Naive thymus-derived CD4-positive, alpha-beta T cell (primary cell): ENCODE measurements at regions of chr18 and their contacts with region 1.

Region 1: GRCh38 chr18:63216516-63217311 is 102.9 kb downstream of the BCL2 start:
- DNase-seq: peak in 7 of 9 donors; percentile 34 to 62 (median 49)
- ATAC-seq: peak; percentile 73
- H3K4me3 ChIP-seq: peak overlapping the region; percentile 25
- H3K4me3 Mint-ChIP-seq: peak overlapping the region; percentile 54 to 89 (median 78)
- H3K27ac ChIP-seq: peak overlapping the region; percentile 63
- H3K27ac Mint-ChIP-seq: peak overlapping the region; percentile 70 to 94 (median 90)
- H3K4me1 ChIP-seq: peaks cover 58 to 75% of the 10 kb centered on the region in 2 donors
- H3K4me1 Mint-ChIP-seq: peaks cover 71 to 99% (median 93%) of the 10 kb centered on the region in 7 donors
- H3K27me3 ChIP-seq: no peaks in the 10 kb centered on the region
- H3K27me3 Mint-ChIP-seq: no peaks in the 10 kb centered on the region

Region 2: GRCh38 chr18:63098018-63098981 is 118.4 kb before region 1 on chr18:
- CTCF ChIA-PET with region 1: no interaction called
- POLR2A ChIA-PET with region 1: no interaction called
- intact Hi-C with region 1: loop called in 1 of 2 experiments (anchors 2 kb)
- DNase-seq: peak in 8 of 9 donors; percentile 41 to 69 (median 58)
- ATAC-seq: peak; percentile 67
- H3K4me3 ChIP-seq: peak overlapping the region; percentile 11
- H3K4me3 Mint-ChIP-seq: peak overlapping the region; percentile 34 to 82 (median 76)
- H3K27ac ChIP-seq: no peak overlapping the region
- H3K27ac Mint-ChIP-seq: peak overlapping the region; percentile 43 to 93 (median 85)
- H3K4me1 ChIP-seq: peaks cover 23 to 30% of the 10 kb centered on the region in 2 donors
- H3K4me1 Mint-ChIP-seq: peaks cover 46 to 69% (median 60%) of the 10 kb centered on the region in 7 donors
- H3K27me3 ChIP-seq: no peaks in the 10 kb centered on the region
- H3K27me3 Mint-ChIP-seq: peaks cover 0 to 41% (median 0%) of the 10 kb centered on the region in 5 donors

Region 3: GRCh38 chr18:63229971-63230370 is 13.3 kb after region 1 on chr18:
- CTCF ChIA-PET with region 1: interaction called, 3 read pairs
- POLR2A ChIA-PET with region 1: interaction called, 7 read pairs
- intact Hi-C with region 1: loop called in 1 of 2 experiments (anchors 1 kb)
- DNase-seq: no peak
- ATAC-seq: no peak
- H3K4me3 ChIP-seq: peak overlapping the region; percentile 28
- H3K4me3 Mint-ChIP-seq: peak overlapping the region; percentile 10 to 87 (median 78)
- H3K27ac ChIP-seq: peak overlapping the region; percentile 61
- H3K27ac Mint-ChIP-seq: peak overlapping the region; percentile 36 to 93 (median 82)
- H3K4me1 ChIP-seq: peaks cover 19 to 61% of the 10 kb centered on the region in 2 donors
- H3K4me1 Mint-ChIP-seq: peaks cover 64 to 94% (median 87%) of the 10 kb centered on the region in 7 donors
- H3K27me3 ChIP-seq: no peaks in the 10 kb centered on the region
- H3K27me3 Mint-ChIP-seq: no peaks in the 10 kb centered on the region

Region 4: DNA sequence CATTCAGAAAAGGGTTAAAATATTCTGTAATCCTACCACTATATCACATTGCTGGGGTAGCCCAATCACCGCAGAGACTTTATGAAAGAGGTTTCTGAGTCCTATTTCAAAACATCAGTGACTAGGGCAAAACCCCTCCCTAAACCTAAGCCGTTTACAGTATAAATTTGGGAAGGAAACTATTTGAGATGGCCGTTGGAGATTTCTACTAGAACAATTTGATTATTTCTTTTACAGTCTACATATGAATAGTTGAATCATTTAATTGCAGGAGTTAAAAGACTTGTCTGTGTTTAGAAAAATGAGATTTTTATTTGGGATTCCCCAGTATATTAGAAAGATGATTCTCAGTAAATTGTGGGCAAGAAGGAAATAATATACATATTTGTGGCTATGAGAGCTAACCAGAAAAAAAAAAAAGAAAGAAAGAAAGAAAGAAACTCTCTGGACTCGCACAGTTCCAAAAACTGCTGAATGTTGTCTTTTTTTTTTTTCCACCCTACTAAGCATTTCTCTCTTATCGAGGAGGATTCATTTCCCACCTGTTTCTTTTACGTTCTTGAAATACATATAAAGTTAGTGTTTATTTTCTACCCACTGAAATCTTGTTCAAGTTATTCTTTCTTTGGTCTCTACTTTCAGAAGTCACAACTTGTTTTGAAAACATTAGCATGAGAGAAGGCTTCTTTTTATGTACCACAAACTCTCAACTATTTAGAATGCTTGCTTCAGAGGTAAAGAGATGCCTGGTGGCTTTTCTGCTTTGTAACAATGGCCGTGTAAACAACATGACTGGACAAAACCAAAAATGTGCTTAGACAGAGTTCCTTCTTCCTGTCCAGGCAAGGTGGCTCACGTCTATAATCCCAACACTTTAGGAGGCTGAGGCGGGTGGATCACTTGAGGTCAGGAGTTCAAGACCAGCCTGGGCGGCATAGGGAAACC is 37.0 kb after region 1 on chr18:
- CTCF ChIA-PET with region 1: no interaction called
- POLR2A ChIA-PET with region 1: interaction called, 4 read pairs
- intact Hi-C with region 1: loop called in 1 of 2 experiments (anchors 5 kb)
- DNase-seq: no peak
- ATAC-seq: peak; percentile 74
- H3K4me3 ChIP-seq: no peak overlapping the region
- H3K4me3 Mint-ChIP-seq: peak overlapping the region in 8 of 10 donors; percentile 1 to 64 (median 32)
- H3K27ac ChIP-seq: no peak overlapping the region
- H3K27ac Mint-ChIP-seq: peak overlapping the region in 8 of 9 donors; percentile 9 to 79 (median 53)
- H3K4me1 ChIP-seq: peaks cover 7 to 25% of the 10 kb centered on the region in 2 donors
- H3K4me1 Mint-ChIP-seq: peaks cover 42 to 81% (median 73%) of the 10 kb centered on the region in 7 donors
- H3K27me3 ChIP-seq: no peaks in the 10 kb centered on the region
- H3K27me3 Mint-ChIP-seq: no peaks in the 10 kb centered on the region

Region 5: GRCh38 chr18:63451799-63452660 is 235.3 kb after region 1 on chr18:
- CTCF ChIA-PET with region 1: no interaction called
- POLR2A ChIA-PET with region 1: no interaction called
- intact Hi-C with region 1: no loop called
- DNase-seq: no peak
- ATAC-seq: no peak
- H3K4me3 ChIP-seq: no peak overlapping the region
- H3K4me3 Mint-ChIP-seq: no peak overlapping the region
- H3K27ac ChIP-seq: no peak overlapping the region
- H3K27ac Mint-ChIP-seq: no peak overlapping the region
- H3K4me1 ChIP-seq: no peaks in the 10 kb centered on the region
- H3K4me1 Mint-ChIP-seq: no peaks in the 10 kb centered on the region
- H3K27me3 ChIP-seq: no peaks in the 10 kb centered on the region
- H3K27me3 Mint-ChIP-seq: peaks cover 0 to 5% (median 0%) of the 10 kb centered on the region in 5 donors